Activated B cell treated with CpG ODN at 0.5 μM for 24 hours (primary cell): ENCODE measurements at regions of chr2 and their contacts with region 1.

Region 1: GRCh38 chr2:161273038-161273760 is 35.0 kb upstream of the PSMD14 start:
- DNase-seq: no peak
- ATAC-seq: peak; percentile 18
- H3K4me3 Mint-ChIP-seq: no peak overlapping the region
- H3K27ac Mint-ChIP-seq: no peak overlapping the region
- H3K4me1 Mint-ChIP-seq: no peaks in the 10 kb centered on the region
- H3K27me3 Mint-ChIP-seq: no peaks in the 10 kb centered on the region
- CTCF ChIP-seq: no peak

Region 2: DNA sequence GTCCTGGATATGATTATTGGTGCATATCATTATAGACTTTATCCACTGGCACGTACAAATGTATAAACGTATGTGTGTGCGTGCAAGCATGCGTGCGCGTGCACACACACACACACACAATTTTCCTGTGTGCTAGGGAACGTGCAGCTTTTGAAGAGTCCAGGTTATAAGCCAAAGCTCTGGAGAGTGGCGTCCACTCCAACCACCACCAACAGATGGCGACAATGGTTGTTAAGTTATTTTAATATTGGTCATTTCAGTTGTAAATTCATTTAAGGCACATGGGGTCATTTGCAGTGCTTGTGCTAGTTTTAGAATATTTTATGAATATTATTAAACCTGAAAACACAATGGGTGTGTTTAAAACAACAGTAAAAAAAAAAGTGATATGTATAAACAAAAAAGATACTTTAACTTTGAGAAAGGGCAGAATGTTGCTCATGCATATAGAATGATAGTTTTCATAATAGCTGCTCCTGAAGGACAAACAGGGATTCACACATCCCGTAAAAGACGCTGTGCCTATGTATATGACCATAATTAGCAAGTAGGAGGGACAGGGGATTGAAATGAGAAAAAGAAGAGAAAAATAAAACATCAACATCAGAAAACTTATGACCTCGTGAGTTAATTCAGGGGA is 948.9 kb before region 1 on chr2:
- CTCF ChIA-PET with region 1: interaction called, 4 read pairs
- POLR2A ChIA-PET with region 1: no interaction called
- intact Hi-C with region 1: loop called (anchors 2 kb)
- DNase-seq: peak; percentile 20
- ATAC-seq: peak; percentile 47
- H3K4me3 Mint-ChIP-seq: no peak overlapping the region
- H3K27ac Mint-ChIP-seq: no peak overlapping the region
- H3K4me1 Mint-ChIP-seq: peaks cover 46% of the 10 kb centered on the region
- H3K27me3 Mint-ChIP-seq: no peaks in the 10 kb centered on the region
- CTCF ChIP-seq: no peak

Region 3: GRCh38 chr2:160429248-160430000 is 843.8 kb before region 1 on chr2:
- CTCF ChIA-PET with region 1: no interaction called
- POLR2A ChIA-PET with region 1: no interaction called
- intact Hi-C with region 1: loop called (anchors 5 kb)
- DNase-seq: no peak
- ATAC-seq: peak; percentile 46
- H3K4me3 Mint-ChIP-seq: no peak overlapping the region
- H3K27ac Mint-ChIP-seq: peak overlapping the region; percentile 54
- H3K4me1 Mint-ChIP-seq: peaks cover 34% of the 10 kb centered on the region
- H3K27me3 Mint-ChIP-seq: no peaks in the 10 kb centered on the region
- CTCF ChIP-seq: peak; percentile 65

Region 4: GRCh38 chr2:161063157-161063954 is 209.8 kb before region 1 on chr2:
- CTCF ChIA-PET with region 1: interaction called, 12 read pairs
- POLR2A ChIA-PET with region 1: no interaction called
- intact Hi-C with region 1: loop called (anchors 1 kb)
- DNase-seq: peak; percentile 18
- ATAC-seq: peak; percentile 93
- H3K4me3 Mint-ChIP-seq: no peak overlapping the region
- H3K27ac Mint-ChIP-seq: no peak overlapping the region
- H3K4me1 Mint-ChIP-seq: peaks cover 4% of the 10 kb centered on the region
- H3K27me3 Mint-ChIP-seq: no peaks in the 10 kb centered on the region
- CTCF ChIP-seq: peak; percentile 94

Region 5: GRCh38 chr2:161228511-161229240 is 44.5 kb before region 1 on chr2:
- CTCF ChIA-PET with region 1: interaction called, 30 read pairs
- POLR2A ChIA-PET with region 1: no interaction called
- intact Hi-C with region 1: loop called (anchors 1 kb)
- DNase-seq: no peak
- ATAC-seq: no peak
- H3K4me3 Mint-ChIP-seq: no peak overlapping the region
- H3K27ac Mint-ChIP-seq: no peak overlapping the region
- H3K4me1 Mint-ChIP-seq: no peaks in the 10 kb centered on the region
- H3K27me3 Mint-ChIP-seq: no peaks in the 10 kb centered on the region
- CTCF ChIP-seq: no peak

Region 6: DNA sequence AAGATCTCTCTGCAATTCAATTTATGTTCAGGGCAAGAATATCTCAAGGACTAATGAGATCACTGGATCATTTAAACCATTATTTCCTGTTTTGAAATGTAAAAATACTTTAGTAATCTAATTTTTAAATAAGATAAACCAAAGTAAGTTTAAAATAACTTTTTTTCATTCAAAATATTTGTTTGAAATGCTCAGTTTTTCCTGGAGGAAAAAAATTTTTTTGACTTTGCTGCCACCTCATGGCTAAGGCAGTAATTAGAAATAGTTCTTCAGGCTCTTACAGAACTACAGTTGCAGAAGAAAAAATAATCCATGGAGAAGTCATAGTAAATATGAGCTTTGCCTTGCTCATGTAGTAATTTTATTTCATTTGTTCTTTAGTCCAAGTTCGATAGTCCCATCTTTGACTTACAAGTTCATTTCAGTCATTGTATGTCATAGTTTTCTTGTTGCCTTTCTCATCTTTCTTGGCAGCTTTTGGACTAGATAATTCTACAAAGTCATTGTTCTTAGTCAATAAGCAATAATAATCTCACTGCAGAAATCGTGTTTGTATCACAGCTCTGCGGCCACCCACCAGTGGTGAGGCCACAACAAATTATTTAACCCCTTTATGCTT is 673.4 kb after region 1 on chr2:
- CTCF ChIA-PET with region 1: no interaction called
- POLR2A ChIA-PET with region 1: no interaction called
- intact Hi-C with region 1: loop called (anchors 10 kb)
- DNase-seq: no peak
- ATAC-seq: no peak
- H3K4me3 Mint-ChIP-seq: no peak overlapping the region
- H3K27ac Mint-ChIP-seq: no peak overlapping the region
- H3K4me1 Mint-ChIP-seq: no peaks in the 10 kb centered on the region
- H3K27me3 Mint-ChIP-seq: no peaks in the 10 kb centered on the region
- CTCF ChIP-seq: no peak